ENCODE measurements at regions of chr17 and their contacts with region 1.

Region 1: DNA sequence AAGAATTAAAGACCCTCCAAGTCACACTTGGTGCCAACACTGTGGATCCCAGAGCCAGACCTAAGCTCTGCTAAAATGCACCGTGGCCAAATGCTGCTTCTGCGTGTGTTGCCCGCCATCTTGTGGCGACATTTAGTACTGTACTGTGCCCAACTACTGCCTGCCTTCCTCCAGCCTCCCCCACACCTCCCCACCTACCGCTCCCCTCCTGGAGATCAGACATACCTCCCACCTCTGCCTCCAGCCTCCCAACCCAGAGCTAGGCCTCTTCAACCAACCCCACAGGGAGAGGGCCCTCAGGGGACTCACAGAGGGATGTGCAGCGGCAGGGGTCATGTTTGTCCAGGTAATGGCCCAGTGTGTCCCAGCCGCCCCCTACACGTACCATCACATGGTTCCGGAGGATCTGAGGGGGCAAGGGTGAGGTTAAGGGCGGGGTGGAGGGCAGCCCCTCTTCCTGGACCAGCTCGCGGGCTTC is 5.5 kb downstream of the GAS2L2 start:
- DNase-seq: peak; percentile 51 to 87 (median 80)
- ATAC-seq: peak; percentile 81 to 94 (median 90)
- H3K4me3 ChIP-seq: no peak overlapping the region
- H3K27ac ChIP-seq: no peak overlapping the region
- H3K4me1 ChIP-seq: peaks cover 0 to 4% (median 0%) of the 10 kb centered on the region in 3 donors
- H3K27me3 ChIP-seq: peaks cover 0 to 8% (median 0%) of the 10 kb centered on the region in 4 donors
- CTCF ChIP-seq: peak; percentile 76 to 90 (median 85)

Region 2: DNA sequence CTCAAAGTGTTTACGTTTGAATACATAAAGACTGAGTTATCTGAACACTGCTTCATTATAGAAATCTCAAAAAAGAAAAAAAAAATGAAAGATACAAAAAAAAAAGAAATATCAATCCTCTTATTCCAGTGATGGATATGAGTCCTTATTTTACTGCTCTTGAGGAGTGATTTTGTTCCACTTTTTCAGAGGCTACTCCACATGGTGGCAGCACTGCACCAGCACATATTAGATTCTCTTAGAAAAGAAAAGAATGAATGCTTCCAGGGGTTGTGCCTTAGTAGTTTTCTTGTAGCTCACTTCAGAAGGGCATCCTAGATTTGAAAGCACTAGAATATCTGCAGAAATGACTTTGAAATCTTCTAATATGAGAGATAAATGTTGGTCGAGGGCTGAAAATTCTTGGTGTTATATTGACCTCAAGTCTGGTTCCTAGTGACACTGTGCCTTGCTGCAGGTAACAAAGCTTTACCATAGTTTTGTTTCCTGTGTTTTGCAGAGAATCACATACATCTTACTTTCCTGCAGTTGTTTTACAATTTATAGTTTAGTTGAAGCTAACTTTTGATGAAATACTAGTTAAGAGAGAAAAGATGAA is 134.6 kb before region 1 on chr17:
- intact Hi-C with region 1: loop called (anchors 5 to 10 kb)
- DNase-seq: peak in 1 of 6 donors; percentile 45
- ATAC-seq: peak in 3 of 4 donors; percentile 68 to 70 (median 69)
- H3K4me3 ChIP-seq: no peak overlapping the region
- H3K27ac ChIP-seq: no peak overlapping the region
- H3K4me1 ChIP-seq: peaks cover 0 to 8% (median 6%) of the 10 kb centered on the region in 3 donors
- H3K27me3 ChIP-seq: no peaks in the 10 kb centered on the region
- CTCF ChIP-seq: peak in 2 of 4 donors; percentile 28

Region 3: DNA sequence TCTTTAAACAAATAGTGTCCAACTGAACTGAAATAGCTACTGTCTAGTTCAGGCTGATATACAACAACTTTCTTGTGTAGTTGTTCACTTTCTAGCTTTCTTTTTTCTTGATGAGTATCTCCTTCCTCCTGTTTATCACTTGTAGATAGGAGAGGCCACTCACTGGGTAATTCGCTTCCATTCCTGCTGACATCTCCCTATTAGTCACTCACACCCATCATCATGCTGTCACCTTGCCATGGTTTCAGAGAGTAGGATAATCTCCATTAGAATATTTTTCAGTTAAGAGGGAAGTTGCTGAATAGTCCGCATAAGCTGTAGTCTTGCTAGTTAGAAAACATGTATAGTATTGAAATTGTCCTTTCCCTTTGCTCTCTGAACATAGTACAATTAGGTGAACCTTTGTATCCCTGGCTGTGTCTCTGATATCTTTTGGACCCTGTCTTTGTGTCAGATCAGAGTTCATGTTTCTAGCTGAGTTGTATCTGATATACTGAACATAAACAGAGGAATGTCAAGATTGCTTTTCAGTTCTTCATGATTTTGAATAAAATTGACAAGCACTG is 80.5 kb before region 1 on chr17:
- intact Hi-C with region 1: loop called in 1 of 3 experiments (anchors 10 kb)
- DNase-seq: no peak
- ATAC-seq: no peak
- H3K4me3 ChIP-seq: no peak overlapping the region
- H3K27ac ChIP-seq: no peak overlapping the region
- H3K4me1 ChIP-seq: no peaks in the 10 kb centered on the region
- H3K27me3 ChIP-seq: no peaks in the 10 kb centered on the region
- CTCF ChIP-seq: no peak

Measured in pancreas (tissue), 10 donors.